ENCODE measurements at regions of chr6 and their contacts with region 1.

Region 1: DNA sequence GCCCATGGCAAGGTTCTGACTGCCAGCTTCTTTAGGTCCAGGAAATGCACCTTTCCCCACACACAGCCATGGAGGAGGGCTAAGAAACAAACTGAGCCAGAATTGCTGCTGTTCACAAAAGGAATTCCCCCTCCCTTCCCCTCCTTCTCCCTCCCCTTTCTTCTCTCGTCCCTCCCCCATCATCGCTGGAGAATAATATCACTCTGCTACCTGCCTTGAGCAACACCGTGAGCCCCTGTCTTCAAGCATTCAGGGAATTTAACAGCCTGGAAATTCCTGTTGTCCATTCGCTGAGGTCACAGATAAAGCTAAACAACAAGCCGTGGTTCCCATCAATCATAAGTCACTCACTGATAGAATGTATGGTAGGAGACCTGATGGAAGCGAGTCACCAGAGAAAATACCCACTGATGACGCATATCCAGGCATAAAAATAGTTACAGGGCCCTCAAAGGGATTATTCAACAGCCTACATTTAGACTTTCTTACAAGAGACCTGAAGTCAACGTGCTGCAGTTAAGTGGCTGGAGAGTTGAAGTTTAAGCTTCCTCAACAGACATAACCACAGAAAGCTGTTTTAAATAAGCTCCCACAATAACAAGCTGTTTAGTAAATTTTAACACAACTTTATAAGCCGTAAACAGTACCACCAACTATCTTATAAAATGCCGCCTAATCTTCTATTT is 59.7 kb downstream of the HIVEP2 start:
- DNase-seq: peak; percentile 98
- H3K4me3 ChIP-seq: peak overlapping the region in 2 of 3 experiments; percentile 1 to 9
- H3K27ac ChIP-seq: peak overlapping the region; percentile 89
- H3K4me1 ChIP-seq: peaks cover 16% of the 10 kb centered on the region
- H3K27me3 ChIP-seq: no peaks in the 10 kb centered on the region
- CTCF ChIP-seq: no peak
- POLR2A ChIP-seq: peak; percentile 49

Region 2: DNA sequence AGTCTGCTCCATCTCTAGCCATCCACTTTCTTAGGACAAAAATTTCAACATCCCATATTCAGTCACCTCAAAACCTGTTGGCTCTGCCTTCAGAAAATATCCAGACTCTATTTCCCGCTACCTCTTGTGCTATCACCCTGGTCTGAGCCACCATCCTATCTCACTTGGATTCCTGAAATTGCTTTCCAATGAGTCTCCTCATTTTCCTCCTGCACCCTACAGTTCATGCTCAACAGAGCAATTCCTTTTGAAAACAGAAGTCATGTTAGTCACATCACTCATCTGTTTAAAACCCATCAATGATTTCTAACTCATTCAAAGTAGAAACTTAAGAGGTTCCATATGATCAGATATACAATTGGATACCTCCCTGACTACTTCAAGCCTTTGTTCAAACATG is 353.6 kb before region 1 on chr6:
- CTCF ChIA-PET with region 1: no interaction called
- POLR2A ChIA-PET with region 1: no interaction called
- dilution Hi-C with region 1: no loop called
- intact Hi-C with region 1: no loop called
- DNase-seq: no peak
- H3K4me3 ChIP-seq: no peak overlapping the region
- H3K27ac ChIP-seq: no peak overlapping the region
- H3K4me1 ChIP-seq: no peaks in the 10 kb centered on the region
- H3K27me3 ChIP-seq: peaks cover 2 to 5% of the 10 kb centered on the region in 2 experiments
- CTCF ChIP-seq: no peak
- POLR2A ChIP-seq: no peak

Region 3: GRCh38 chr6:142819603-142820337 is 65.6 kb before region 1 on chr6:
- CTCF ChIA-PET with region 1: interaction called, 3 read pairs
- POLR2A ChIA-PET with region 1: no interaction called
- dilution Hi-C with region 1: no loop called
- intact Hi-C with region 1: loop called (anchors 1 kb)
- DNase-seq: peak; percentile 95
- H3K4me3 ChIP-seq: peak overlapping the region; percentile 16 to 71 (median 27)
- H3K27ac ChIP-seq: peak overlapping the region; percentile 93
- H3K4me1 ChIP-seq: peaks cover 16% of the 10 kb centered on the region
- H3K27me3 ChIP-seq: no peaks in the 10 kb centered on the region
- CTCF ChIP-seq: no peak
- POLR2A ChIP-seq: no peak

Region 4: GRCh38 chr6:142871910-142872331 is 13.4 kb before region 1 on chr6:
- CTCF ChIA-PET with region 1: interaction called, 25 read pairs
- POLR2A ChIA-PET with region 1: no interaction called
- dilution Hi-C with region 1: no loop called
- intact Hi-C with region 1: loop called (anchors 1 kb)
- DNase-seq: peak; percentile 90
- H3K4me3 ChIP-seq: no peak overlapping the region
- H3K27ac ChIP-seq: peak overlapping the region; percentile 59
- H3K4me1 ChIP-seq: peaks cover 40% of the 10 kb centered on the region
- H3K27me3 ChIP-seq: no peaks in the 10 kb centered on the region
- CTCF ChIP-seq: no peak
- POLR2A ChIP-seq: no peak

Region 5: GRCh38 chr6:142926494-142927270 is 41.4 kb after region 1 on chr6:
- CTCF ChIA-PET with region 1: interaction called, 4 read pairs
- POLR2A ChIA-PET with region 1: no interaction called
- dilution Hi-C with region 1: no loop called
- intact Hi-C with region 1: loop called (anchors 1 kb)
- DNase-seq: peak; percentile 82
- H3K4me3 ChIP-seq: peak overlapping the region; percentile 47 to 76 (median 60)
- H3K27ac ChIP-seq: peak overlapping the region; percentile 79
- H3K4me1 ChIP-seq: peaks cover 16% of the 10 kb centered on the region
- H3K27me3 ChIP-seq: no peaks in the 10 kb centered on the region
- CTCF ChIP-seq: no peak
- POLR2A ChIP-seq: peak; percentile 34

Region 6: GRCh38 chr6:143060354-143060805 is 175.1 kb after region 1 on chr6:
- CTCF ChIA-PET with region 1: no interaction called
- POLR2A ChIA-PET with region 1: no interaction called
- dilution Hi-C with region 1: no loop called
- intact Hi-C with region 1: loop called (anchors 2 kb)
- DNase-seq: peak; percentile 82
- H3K4me3 ChIP-seq: peak overlapping the region; percentile 35 to 76 (median 67)
- H3K27ac ChIP-seq: peak overlapping the region; percentile 83
- H3K4me1 ChIP-seq: peaks cover 10% of the 10 kb centered on the region
- H3K27me3 ChIP-seq: no peaks in the 10 kb centered on the region
- CTCF ChIP-seq: peak in 1 of 2 donors; percentile 15
- POLR2A ChIP-seq: no peak

Measured in endothelial cell of umbilical vein (primary cell).